MCF 10A (cell line): ENCODE measurements at regions of chr2 and their contacts with region 1.

Region 1: DNA sequence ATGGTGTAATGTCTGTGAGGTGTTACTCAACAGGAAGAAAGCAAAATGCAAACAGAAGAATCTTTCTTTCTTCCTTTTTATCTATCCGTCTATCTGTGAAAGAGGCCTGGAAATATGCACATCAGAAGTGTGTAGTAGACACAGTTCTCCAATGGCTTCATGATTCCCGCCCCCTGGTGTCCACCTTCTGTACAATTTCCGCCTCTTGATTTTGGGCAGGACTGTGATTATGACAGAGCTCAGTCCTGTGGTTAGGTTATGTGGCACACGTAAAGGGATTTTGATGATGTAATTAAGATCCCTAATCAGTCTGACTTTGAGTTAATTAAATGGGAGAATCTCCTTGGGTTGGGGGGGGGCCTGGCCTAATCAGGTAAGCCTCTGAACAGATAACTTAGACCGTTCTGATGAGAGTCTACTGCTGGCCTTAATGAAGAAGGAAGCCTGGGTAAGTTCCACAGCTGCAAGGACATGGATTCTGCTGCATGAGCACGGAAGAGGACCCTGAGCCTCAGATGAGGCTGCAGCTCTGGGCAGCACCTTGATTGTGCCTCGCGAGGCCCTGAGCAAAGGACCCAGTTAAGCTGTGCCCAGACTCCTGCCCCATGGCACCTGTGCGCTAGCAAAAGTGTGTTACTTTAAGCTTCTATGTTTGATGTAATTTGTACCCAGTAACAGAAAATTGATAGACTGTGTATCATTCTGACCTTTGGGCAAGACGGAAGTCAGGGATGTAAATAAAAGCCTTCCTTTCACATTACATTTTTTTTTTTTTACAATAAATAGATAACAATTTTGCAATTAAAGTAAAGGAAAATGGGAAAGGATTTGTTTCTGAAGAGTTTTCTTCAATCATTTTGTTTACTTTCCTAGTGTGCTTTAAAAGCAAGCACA is 11.3 kb upstream of the KCNF1 start:
- DNase-seq: peak; percentile 82
- H3K4me3 Mint-ChIP-seq: no peak overlapping the region
- H3K27ac Mint-ChIP-seq: no peak overlapping the region
- H3K4me1 Mint-ChIP-seq: peaks cover 15% of the 10 kb centered on the region
- H3K27me3 Mint-ChIP-seq: no peaks in the 10 kb centered on the region
- CTCF ChIP-seq: peak; percentile 30

Region 2: DNA sequence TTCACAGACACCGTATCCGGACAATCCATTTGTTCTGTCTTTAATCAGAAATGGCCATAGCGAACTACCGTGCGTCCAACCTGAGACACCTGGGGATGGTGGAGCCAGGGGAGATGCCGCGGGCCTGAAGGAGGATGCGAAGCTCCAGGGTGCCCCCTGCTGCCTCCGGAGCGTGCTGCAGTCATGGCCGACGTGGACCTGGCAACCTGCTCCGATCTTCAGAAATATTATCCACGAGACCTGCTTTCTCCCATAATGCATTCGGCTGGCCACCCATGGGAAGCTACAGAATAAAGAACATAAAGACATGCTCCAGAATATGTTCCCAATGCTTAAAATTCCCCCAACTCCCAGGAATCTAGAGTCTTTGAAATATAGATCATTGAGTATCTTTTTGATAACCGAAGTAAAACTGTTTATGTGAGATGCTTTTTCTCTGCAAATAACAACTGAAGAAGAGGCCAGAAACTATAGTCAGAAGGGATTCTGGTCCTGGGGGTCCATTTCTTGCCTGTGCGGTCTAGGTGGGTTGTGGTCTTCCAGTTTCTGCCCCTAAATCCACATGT is 224.1 kb after region 1 on chr2:
- CTCF ChIA-PET with region 1: interaction called, 3 read pairs
- POLR2A ChIA-PET with region 1: no interaction called
- intact Hi-C with region 1: loop called (anchors 5 kb)
- DNase-seq: peak; percentile 56
- H3K4me3 Mint-ChIP-seq: no peak overlapping the region
- H3K27ac Mint-ChIP-seq: no peak overlapping the region
- H3K4me1 Mint-ChIP-seq: no peaks in the 10 kb centered on the region
- H3K27me3 Mint-ChIP-seq: peaks cover 16% of the 10 kb centered on the region
- CTCF ChIP-seq: peak; percentile 92